Heart right ventricle (tissue), 16 donors: ENCODE measurements at regions of chr12 and their contacts with region 1.

Region 1: GRCh38 chr12:38070857-38071256 is 245.7 kb upstream of the ALG10B start:
- DNase-seq: no peak
- ATAC-seq: no peak
- H3K4me3 ChIP-seq: no peak overlapping the region
- H3K27ac ChIP-seq: no peak overlapping the region
- H3K4me1 ChIP-seq: no peaks in the 10 kb centered on the region
- H3K27me3 ChIP-seq: no peaks in the 10 kb centered on the region
- CTCF ChIP-seq: no peak

Region 2: DNA sequence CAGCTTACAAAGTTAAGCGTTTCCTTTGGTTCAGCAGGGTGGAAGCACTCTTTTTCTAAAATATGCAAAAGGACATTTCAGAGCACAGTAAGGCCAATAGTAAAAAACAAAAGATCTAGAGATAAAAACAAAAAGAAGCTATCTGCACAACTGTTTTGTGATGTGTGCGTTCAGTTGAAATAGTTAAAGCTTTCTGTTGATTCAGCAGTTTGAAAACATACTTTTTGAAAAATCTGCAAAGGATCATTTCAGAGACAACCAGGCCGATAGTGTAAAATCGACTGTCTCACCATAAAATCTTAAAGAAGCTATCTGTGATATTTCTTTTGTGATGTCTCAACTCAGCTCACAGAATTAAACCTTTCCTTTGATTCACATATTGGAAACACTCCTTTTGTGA is 54.3 kb before region 1 on chr12:
- intact Hi-C with region 1: loop called in 1 of 10 experiments (anchors 2 kb)
- DNase-seq: no peak
- ATAC-seq: no peak
- H3K4me3 ChIP-seq: no peak overlapping the region
- H3K27ac ChIP-seq: no peak overlapping the region
- H3K4me1 ChIP-seq: no peaks in the 10 kb centered on the region
- H3K27me3 ChIP-seq: no peaks in the 10 kb centered on the region
- CTCF ChIP-seq: no peak